GM10248 (cell line): ENCODE measurements at regions of chr6 and their contacts with region 1.

Region 1: GRCh38 chr6:35797837-35798526 is 859 bp upstream of the CLPS start:
- DNase-seq: no peak
- CTCF ChIP-seq: no peak

Region 2: GRCh38 chr6:35583893-35584688 is 213.9 kb before region 1 on chr6:
- CTCF ChIA-PET with region 1: no interaction called
- POLR2A ChIA-PET with region 1: no interaction called
- DNase-seq: peak; percentile 53
- CTCF ChIP-seq: peak; percentile 71

Region 3: DNA sequence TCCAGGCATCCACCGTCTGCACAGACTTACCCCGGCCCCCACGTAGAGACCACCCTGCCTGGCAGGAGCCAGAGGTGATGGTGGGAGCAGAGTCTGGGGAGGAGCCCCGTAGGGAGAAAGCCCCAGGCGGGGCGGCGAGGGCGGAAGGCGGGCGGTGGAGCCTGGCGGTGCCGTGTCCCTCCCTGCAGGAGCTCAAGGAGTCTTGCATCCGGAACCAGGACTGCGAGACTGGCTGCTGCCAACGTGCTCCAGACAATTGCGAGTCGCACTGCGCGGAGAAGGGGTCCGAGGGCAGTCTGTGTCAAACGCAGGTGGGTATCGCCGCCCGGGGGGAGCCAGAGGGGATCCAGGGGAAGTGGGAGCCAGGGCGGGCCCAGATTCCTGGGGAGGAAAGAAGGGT is 11.2 kb before region 1 on chr6:
- CTCF ChIA-PET with region 1: interaction called, 27 read pairs
- POLR2A ChIA-PET with region 1: no interaction called
- DNase-seq: no peak
- CTCF ChIP-seq: no peak